Caco-2 (cell line): ENCODE measurements at regions of chr3 and their contacts with region 1.

Region 1: GRCh38 chr3:97940034-97940433 is 32.2 kb downstream of the RIOX2 start:
- DNase-seq: peak in 1 of 2 experiments; percentile 13
- H3K4me3 ChIP-seq: no peak overlapping the region
- H3K4me3 Mint-ChIP-seq: no peak overlapping the region
- H3K27ac Mint-ChIP-seq: no peak overlapping the region
- H3K4me1 ChIP-seq: no peaks in the 10 kb centered on the region; the same call in 1 of the 2 replicates
- H3K4me1 Mint-ChIP-seq: no peaks in the 10 kb centered on the region
- H3K27me3 ChIP-seq: no peaks in the 10 kb centered on the region
- H3K27me3 Mint-ChIP-seq: no peaks in the 10 kb centered on the region
- CTCF ChIP-seq: no peak

Region 2: DNA sequence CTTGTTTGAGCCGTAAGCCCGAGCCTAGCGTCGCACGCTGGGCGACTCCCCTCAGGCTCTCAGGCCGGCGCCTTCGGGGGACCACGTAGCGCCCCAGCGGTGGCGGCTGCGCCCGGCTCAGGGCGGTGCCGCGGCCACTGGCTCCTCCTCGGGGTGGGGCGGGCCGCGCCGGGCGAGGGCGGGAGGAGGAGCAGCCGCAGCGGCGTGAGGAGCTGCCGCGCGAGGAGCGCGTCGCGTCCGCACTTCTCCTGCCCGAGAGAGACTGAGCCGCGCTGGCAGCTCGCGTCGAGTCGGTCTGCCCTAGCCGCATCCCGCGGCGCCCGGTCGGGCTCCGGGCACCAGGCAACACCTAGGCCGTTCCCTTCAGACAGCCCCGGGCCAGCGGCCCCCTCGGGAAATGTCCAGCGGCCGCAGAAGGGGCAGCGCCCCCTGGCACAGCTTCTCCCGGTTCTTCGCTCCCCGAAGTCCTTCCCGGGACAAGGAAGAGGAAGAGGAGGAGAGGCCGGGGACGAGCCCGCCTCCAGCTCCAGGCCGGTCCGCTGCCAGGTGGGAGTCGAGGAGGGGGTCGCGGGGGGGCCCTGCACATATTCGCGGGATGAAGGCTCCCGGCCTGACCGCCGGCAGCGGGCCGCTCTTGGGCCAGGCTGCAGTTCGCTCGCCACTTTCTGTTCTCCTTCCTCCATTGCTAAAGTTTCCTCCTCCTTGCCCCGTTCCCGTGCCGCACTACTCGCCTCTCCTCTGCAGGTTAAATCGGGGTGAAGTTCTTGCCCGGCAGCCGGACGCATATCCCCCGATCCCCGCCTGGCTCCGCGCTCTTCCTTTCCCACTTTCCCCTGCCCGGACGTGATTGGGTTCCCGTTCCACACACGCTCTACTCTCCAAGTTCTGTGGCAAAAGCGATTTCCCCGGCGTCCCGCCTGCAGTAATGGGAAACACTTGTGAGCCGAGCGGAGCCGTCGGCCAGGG is 117.9 kb before region 1 on chr3 and contains the start of gene CRYBG3:
- CTCF ChIA-PET with region 1: no interaction called
- POLR2A ChIA-PET with region 1: no interaction called
- intact Hi-C with region 1: loop called (anchors 10 kb)
- DNase-seq: peak; percentile 59 to 78
- H3K4me3 ChIP-seq: peak within 1 kb of the TSS; percentile 58
- H3K4me3 Mint-ChIP-seq: peak within 1 kb of the TSS; percentile 82
- H3K27ac Mint-ChIP-seq: peak within 1 kb of the TSS; percentile 34
- H3K4me1 ChIP-seq: no peaks in the 10 kb centered on the region
- H3K4me1 Mint-ChIP-seq: peaks cover 8% of the 10 kb centered on the region
- H3K27me3 ChIP-seq: peaks cover 2% of the 10 kb centered on the region; the same call in 1 of the 2 replicates
- H3K27me3 Mint-ChIP-seq: peaks cover 31% of the 10 kb centered on the region
- CTCF ChIP-seq: peak in 1 of 2 experiments; percentile 36
- total RNA-seq, gene CRYBG3: 1.3 TPM in 2 replicates